GM18951 (cell line): ENCODE measurements at regions of chr3 and their contacts with region 1.

Region 1: DNA sequence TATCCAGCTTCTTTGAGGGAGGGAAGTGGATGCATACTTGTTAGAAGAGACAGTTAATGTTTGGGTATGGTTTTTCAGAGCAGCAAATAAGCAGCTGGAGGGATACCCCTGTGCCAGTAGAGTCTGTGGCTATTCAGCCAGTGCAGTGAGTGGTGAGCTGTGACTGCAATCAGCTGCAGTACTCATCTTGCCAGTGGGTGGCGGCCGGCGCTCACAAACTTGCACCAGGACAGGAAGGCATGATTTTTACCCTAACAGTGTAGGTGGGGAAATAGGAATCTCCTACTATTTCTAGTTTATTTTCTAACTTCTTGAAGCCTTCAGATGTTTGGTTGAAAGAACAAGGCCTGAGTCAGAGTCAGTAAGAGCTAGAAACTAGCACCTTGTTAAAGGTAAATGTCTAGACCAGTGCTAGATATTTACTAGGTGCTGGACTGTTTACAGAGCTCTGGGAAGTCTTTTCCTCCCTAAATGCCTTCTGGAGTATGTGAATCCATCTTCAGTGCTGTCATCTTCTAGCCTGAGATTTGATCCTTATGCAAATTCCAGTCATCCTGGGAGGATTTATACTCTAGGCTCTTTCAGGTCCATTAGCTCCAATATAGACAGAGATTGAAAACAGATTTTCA is 23.6 kb downstream of the TIMP4 start:
- POLR2A ChIP-seq: no peak

Region 2: DNA sequence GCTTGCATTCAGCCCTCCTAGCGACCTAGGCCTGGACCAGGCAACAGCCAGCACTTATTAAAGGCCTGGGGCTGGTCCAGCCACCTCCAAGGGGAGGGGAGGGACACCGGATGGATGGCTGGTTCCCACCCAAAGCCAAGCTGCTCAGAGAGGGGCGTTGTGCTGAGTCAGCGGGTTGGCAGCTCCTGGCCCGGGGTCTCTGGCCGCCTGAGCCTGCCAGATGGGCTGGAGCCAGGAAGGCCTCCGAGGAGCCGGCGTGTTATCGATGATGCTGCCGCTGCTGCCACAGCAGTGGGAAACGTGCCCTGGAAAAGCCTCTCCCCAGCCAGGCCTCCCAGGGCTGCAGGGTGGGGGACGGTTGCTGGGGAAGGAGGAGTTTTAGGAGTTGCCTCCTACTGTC is 305.8 kb after region 1 on chr3:
- in situ Hi-C with region 1: no loop called
- POLR2A ChIP-seq: no peak

Region 3: GRCh38 chr3:12484198-12484974 is 349.2 kb after region 1 on chr3 and contains the start of gene TSEN2:
- in situ Hi-C with region 1: loop called (anchors 5 kb)
- POLR2A ChIP-seq: peak; percentile 96

Region 4: GRCh38 chr3:12719984-12720898 is 585.1 kb after region 1 on chr3:
- in situ Hi-C with region 1: loop called (anchors 25 kb)
- POLR2A ChIP-seq: no peak